Mammary epithelial cell (primary cell): ENCODE measurements at regions of chr15 and their contacts with region 1.

Region 1: GRCh38 chr15:42094512-42094963 is at the start of gene PLA2G4D:
- DNase-seq: peak; percentile 35
- H3K4me3 ChIP-seq: no peak within 1 kb of the TSS
- H3K27ac ChIP-seq: no peak within 1 kb of the TSS
- H3K4me1 ChIP-seq: peaks cover 28% of the 10 kb centered on the region
- H3K27me3 ChIP-seq: no peaks in the 10 kb centered on the region
- CTCF ChIP-seq: peak in 1 of 2 donors; percentile 50
- total RNA-seq, gene PLA2G4D: under 0.01 to 0.19 TPM

Region 2: DNA sequence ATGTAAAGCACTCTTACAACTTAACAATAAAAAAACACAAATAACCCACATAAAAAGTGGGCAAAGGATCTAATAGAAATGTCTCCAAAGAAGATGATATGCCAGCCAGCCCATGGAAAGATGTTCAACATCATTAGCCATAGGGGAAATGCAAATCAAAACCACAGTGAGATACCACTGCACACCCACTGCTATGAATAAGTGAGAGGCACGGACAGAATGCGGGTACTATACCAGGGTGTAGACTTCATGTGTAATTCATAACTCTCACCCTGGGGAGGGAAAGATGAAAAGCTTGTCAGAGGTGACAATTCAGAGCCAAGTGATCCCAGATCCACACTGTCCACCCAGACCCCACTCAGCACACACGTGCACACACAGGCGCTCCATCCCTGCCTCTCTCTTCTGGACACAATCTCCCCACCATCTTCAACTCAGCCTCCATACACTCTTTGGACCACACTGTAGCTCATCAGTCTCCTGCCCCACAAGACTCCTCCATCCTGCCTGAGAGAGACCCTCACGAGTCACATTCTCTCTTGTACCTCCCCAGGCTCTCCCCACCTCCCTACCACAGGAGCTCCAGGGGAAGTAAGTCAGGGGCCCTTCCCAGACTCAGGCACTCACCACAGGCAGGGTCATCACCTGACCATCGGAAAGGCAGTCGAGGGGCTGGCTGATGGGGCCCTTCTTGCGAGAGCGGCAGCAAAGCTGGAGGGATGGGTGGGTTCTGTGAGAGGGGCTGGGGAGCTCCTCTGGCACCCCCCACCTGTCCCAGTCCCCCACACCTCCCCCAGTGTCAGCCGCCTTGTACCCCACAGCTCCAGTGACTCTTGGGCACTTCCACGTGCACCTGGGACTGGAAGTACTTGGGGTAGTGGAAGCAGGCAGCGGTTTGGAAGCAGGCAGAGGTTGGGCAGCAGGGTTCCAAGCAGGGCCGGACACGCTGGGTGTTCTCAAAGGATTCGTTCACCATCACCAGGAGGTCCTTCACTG is 95.0 kb before region 1 on chr15:
- CTCF ChIA-PET with region 1: no interaction called
- dilution Hi-C with region 1: loop called (anchors 5 kb)
- in situ Hi-C with region 1: no loop called
- intact Hi-C with region 1: no loop called
- DNase-seq: no peak
- H3K4me3 ChIP-seq: no peak overlapping the region
- H3K27ac ChIP-seq: no peak overlapping the region
- H3K4me1 ChIP-seq: no peaks in the 10 kb centered on the region
- H3K27me3 ChIP-seq: no peaks in the 10 kb centered on the region
- CTCF ChIP-seq: no peak

Region 3: DNA sequence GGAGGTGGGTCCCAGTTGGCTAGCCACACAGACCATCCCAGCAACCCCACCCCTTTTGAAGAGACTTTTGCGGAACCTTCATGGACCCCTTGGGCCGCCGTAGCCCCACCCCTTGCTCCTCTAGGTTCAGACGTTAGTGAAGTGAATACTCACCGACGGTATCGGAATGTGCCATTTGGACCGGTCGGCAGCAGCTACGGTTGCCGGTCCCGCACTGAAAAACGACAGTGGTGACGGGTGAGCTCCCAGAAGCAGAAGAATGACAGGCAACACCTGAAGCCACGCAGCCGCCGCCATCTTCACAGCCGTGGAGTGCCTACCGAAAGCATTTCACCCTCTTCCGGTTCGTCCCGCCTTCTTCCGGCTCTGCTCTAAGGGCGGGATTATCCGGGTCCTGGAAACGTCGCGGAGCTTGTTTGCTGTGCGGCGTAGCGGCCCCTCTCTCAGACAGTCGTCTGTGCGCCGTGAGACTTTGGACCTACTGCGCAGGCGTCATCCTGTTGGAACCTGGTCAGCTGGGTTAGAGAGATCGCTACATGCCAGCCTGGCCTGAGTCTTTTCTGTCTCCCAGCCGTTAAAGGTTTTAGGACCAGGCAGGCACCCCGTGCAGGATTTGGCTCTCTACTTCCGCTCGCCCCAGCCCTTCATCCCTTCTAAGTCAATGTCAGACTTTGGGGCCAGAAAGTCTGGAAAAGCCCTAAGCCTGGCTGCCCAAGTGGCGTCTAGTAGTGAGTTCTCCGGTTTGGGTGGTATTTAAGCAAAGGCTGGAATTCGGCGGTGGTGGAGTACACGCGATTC is 178.8 kb after region 1 on chr15 and contains the starts of genes GANC and TMEM87A:
- CTCF ChIA-PET with region 1: no interaction called
- dilution Hi-C with region 1: no loop called
- in situ Hi-C with region 1: no loop called
- intact Hi-C with region 1: no loop called
- DNase-seq: peak; percentile 98
- H3K4me3 ChIP-seq: peak within 1 kb of the TSS; percentile 72 to 90 (median 78)
- H3K27ac ChIP-seq: peak within 1 kb of the TSS; percentile 99
- H3K4me1 ChIP-seq: peaks cover 15% of the 10 kb centered on the region
- H3K27me3 ChIP-seq: no peaks in the 10 kb centered on the region
- CTCF ChIP-seq: no peak
- total RNA-seq, gene GANC: 34.0 to 45.7 TPM
- total RNA-seq, gene TMEM87A: 56.3 to 103 TPM